Activated CD4-positive, alpha-beta memory T cell treated with anti-CD3 and anti-CD28 coated beads for 36 hours (primary cell): ENCODE measurements at regions of chr1 and their contacts with region 1.

Region 1: GRCh38 chr1:58573705-58574591 is 3.1 kb downstream of the TACSTD2 start:
- DNase-seq: peak; percentile 78
- H3K4me3 Mint-ChIP-seq: no peak overlapping the region
- H3K27ac Mint-ChIP-seq: peak overlapping the region; percentile 43
- H3K4me1 Mint-ChIP-seq: peaks cover 40% of the 10 kb centered on the region
- H3K27me3 Mint-ChIP-seq: peaks cover 57% of the 10 kb centered on the region

Region 2: DNA sequence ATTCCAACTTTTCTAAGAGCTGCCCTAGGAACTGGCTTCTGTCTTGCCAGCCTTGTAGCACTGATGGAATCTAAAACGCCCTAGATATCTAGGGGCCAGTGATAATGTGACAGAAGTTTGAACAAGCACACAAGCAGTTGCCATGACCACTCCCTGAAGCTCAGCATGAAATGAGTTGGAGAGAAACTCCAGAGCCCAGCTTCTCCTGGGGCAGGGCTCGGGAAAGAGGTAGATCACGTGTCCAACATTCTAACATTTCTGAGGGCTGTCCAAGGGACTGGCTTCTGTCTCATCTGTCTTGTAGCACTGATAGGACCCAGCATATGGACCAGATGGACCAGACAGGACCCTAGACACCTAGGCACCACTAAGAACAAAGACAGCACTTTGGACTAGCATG is 65.3 kb before region 1 on chr1:
- CTCF ChIA-PET with region 1: no interaction called
- POLR2A ChIA-PET with region 1: no interaction called
- intact Hi-C with region 1: no loop called
- DNase-seq: no peak
- H3K4me3 Mint-ChIP-seq: no peak overlapping the region
- H3K27ac Mint-ChIP-seq: no peak overlapping the region
- H3K4me1 Mint-ChIP-seq: no peaks in the 10 kb centered on the region
- H3K27me3 Mint-ChIP-seq: no peaks in the 10 kb centered on the region

Region 3: DNA sequence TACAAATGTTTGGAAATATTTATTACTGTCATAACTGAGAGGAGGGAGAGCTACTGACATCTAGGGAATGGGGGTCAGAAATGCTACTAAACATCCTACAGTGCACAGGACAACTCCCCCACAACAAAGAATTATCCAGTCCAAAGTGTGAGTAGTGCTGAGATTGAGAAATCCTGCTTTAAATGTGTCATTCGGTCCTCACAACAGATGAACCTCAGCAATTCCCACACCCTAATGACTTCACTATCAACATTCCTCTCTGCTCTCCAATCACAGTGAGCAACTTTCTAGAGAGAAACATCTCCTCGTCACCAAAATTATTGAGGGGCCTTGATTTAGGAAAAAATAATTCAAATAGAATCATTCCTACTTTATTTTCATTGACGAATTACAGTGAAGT is 45.4 kb before region 1 on chr1:
- CTCF ChIA-PET with region 1: no interaction called
- POLR2A ChIA-PET with region 1: interaction called, 3 read pairs
- intact Hi-C with region 1: loop called (anchors 1 kb)
- DNase-seq: no peak
- H3K4me3 Mint-ChIP-seq: no peak overlapping the region
- H3K27ac Mint-ChIP-seq: no peak overlapping the region
- H3K4me1 Mint-ChIP-seq: peaks cover 19% of the 10 kb centered on the region
- H3K27me3 Mint-ChIP-seq: no peaks in the 10 kb centered on the region

Region 4: DNA sequence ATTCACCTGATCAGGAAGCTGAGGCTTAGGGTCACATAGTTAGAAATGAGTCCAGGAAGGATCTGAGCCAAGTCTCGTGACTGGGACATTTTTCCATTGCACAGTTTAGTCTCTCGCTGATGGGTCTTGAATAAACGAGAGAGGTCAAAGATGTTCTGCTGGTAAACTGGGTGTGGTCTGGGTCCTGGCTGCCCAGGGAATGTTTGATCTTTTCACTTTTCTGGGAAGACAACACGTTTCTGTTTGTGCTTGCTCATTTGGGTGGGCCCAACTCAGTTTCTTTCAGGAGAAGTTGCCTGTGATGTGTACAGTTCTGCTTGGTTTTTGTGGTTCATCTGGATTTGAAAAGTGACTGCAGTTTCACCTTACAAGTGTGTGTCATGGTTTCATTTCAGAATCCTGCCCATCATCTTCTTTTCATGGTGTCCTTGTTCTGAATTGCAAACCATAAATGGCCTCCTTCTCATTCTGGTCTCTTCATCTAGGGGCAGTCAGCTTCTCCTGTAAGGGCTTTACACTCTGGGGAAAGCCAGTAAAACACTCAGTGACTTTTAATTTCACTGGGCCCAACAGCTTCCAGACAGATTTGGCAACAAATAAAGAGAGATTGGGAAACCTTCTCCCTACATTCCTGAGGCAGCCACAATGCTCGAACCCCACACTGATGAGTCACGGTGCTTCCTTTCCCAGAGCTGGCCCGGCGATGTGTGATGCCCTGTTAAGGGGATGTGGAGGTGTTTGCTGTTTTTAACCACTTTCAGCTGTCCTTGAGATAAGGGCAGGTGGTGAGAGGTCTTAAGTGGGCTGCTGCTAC is 10.3 kb after region 1 on chr1:
- CTCF ChIA-PET with region 1: interaction called, 3 read pairs
- POLR2A ChIA-PET with region 1: interaction called, 3 read pairs
- intact Hi-C with region 1: loop called (anchors 1 kb)
- DNase-seq: no peak
- H3K4me3 Mint-ChIP-seq: no peak overlapping the region
- H3K27ac Mint-ChIP-seq: no peak overlapping the region
- H3K4me1 Mint-ChIP-seq: peaks cover 16% of the 10 kb centered on the region
- H3K27me3 Mint-ChIP-seq: peaks cover 50% of the 10 kb centered on the region